ENCODE measurements at regions of chr19 and their contacts with region 1.

Region 1: GRCh38 chr19:37906869-37907734 is at the start of gene SIPA1L3:
- DNase-seq: peak; percentile 96 to 99 (median 98)
- H3K4me3 ChIP-seq: peak within 1 kb of the TSS; percentile 86 to 99 (median 89)
- H3K27ac ChIP-seq: peak within 1 kb of the TSS; percentile 72 to 85
- H3K4me1 ChIP-seq: peaks cover 14 to 25% (median 25%) of the 10 kb centered on the region in 4 experiments
- H3K27me3 ChIP-seq: no peaks in the 10 kb centered on the region

Region 2: GRCh38 chr19:37855098-37855497 is 52.0 kb before region 1 on chr19:
- CTCF ChIA-PET with region 1: no interaction called
- POLR2A ChIA-PET with region 1: no interaction called
- DNase-seq: peak; percentile 42 to 66 (median 62)
- H3K4me3 ChIP-seq: peak overlapping the region in 3 of 7 experiments; percentile 8 to 50 (median 45)
- H3K27ac ChIP-seq: no peak overlapping the region
- H3K4me1 ChIP-seq: peaks cover 0 to 5% (median 2%) of the 10 kb centered on the region in 4 experiments
- H3K27me3 ChIP-seq: peaks cover 0 to 23% (median 17%) of the 10 kb centered on the region in 5 experiments

Region 3: GRCh38 chr19:37931881-37932655 is 25.0 kb after region 1 on chr19:
- CTCF ChIA-PET with region 1: interaction called, 12 read pairs
- POLR2A ChIA-PET with region 1: no interaction called
- DNase-seq: peak; percentile 57 to 84 (median 82)
- H3K4me3 ChIP-seq: peak overlapping the region in 6 of 7 experiments; percentile 51 to 73 (median 59)
- H3K27ac ChIP-seq: peak overlapping the region; percentile 70 to 84
- H3K4me1 ChIP-seq: peaks cover 10 to 67% (median 59%) of the 10 kb centered on the region in 4 experiments
- H3K27me3 ChIP-seq: no peaks in the 10 kb centered on the region

Region 4: GRCh38 chr19:38020311-38020710 is 113.2 kb after region 1 on chr19:
- CTCF ChIA-PET with region 1: interaction called, 13 read pairs
- POLR2A ChIA-PET with region 1: interaction called, 3 read pairs
- DNase-seq: peak; percentile 84 to 96 (median 93)
- H3K4me3 ChIP-seq: peak overlapping the region in 3 of 7 experiments; percentile 28 to 30 (median 28)
- H3K27ac ChIP-seq: peak overlapping the region; percentile 26 to 72
- H3K4me1 ChIP-seq: peaks cover 15 to 90% (median 83%) of the 10 kb centered on the region in 4 experiments
- H3K27me3 ChIP-seq: no peaks in the 10 kb centered on the region

Region 5: GRCh38 chr19:38044267-38045111 is 137.4 kb after region 1 on chr19:
- CTCF ChIA-PET with region 1: interaction called, 21 read pairs
- POLR2A ChIA-PET with region 1: no interaction called
- DNase-seq: peak in 2 of 3 donors; percentile 64 to 65
- H3K4me3 ChIP-seq: no peak overlapping the region
- H3K27ac ChIP-seq: no peak overlapping the region
- H3K4me1 ChIP-seq: peaks cover 6 to 54% (median 43%) of the 10 kb centered on the region in 4 experiments
- H3K27me3 ChIP-seq: no peaks in the 10 kb centered on the region

Region 6: GRCh38 chr19:38095411-38096308 is 188.6 kb after region 1 on chr19:
- CTCF ChIA-PET with region 1: interaction called, 41 read pairs
- POLR2A ChIA-PET with region 1: no interaction called
- DNase-seq: peak; percentile 64 to 87 (median 81)
- H3K4me3 ChIP-seq: no peak overlapping the region
- H3K27ac ChIP-seq: peak overlapping the region in 1 of 2 experiments; percentile 17
- H3K4me1 ChIP-seq: peaks cover 0 to 4% (median 1%) of the 10 kb centered on the region in 4 experiments
- H3K27me3 ChIP-seq: no peaks in the 10 kb centered on the region